ENCODE measurements at regions of chr22 and their contacts with region 1.

Region 1: GRCh38 chr22:21712894-21713712 is 22.5 kb downstream of the YPEL1 start:
- DNase-seq: peak; percentile 93
- H3K4me3 ChIP-seq: no peak overlapping the region
- H3K27ac ChIP-seq: no peak overlapping the region
- H3K4me1 ChIP-seq: peaks cover 4% of the 10 kb centered on the region
- H3K27me3 ChIP-seq: no peaks in the 10 kb centered on the region
- CTCF ChIP-seq: peak; percentile 90

Region 2: DNA sequence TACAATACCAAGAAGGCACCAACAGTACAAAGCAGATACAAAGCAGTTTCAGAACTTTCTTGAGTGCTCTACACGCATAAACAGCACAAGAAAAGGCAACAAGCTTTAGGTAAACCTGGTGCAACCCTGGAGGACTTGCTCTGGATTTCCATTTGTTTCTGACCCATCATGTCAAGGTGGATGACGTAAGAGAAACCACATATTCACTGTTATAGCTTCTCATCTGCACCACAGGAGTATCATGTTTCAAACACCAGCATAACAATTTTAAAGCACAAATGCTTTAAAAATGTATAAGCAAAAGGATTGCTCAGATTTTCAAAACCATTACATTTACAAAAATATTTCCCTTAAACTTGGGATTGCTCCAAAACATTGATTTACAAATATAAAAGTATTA is 47.5 kb after region 1 on chr22:
- CTCF ChIA-PET with region 1: no interaction called
- POLR2A ChIA-PET with region 1: no interaction called
- intact Hi-C with region 1: loop called (anchors 5 kb)
- DNase-seq: no peak
- H3K4me3 ChIP-seq: no peak overlapping the region
- H3K27ac ChIP-seq: no peak overlapping the region
- H3K4me1 ChIP-seq: peaks cover 9% of the 10 kb centered on the region
- H3K27me3 ChIP-seq: no peaks in the 10 kb centered on the region
- CTCF ChIP-seq: no peak

Region 3: GRCh38 chr22:21771631-21771976 is 58.5 kb after region 1 on chr22:
- CTCF ChIA-PET with region 1: no interaction called
- POLR2A ChIA-PET with region 1: no interaction called
- intact Hi-C with region 1: no loop called
- DNase-seq: no peak
- H3K4me3 ChIP-seq: no peak overlapping the region
- H3K27ac ChIP-seq: no peak overlapping the region
- H3K4me1 ChIP-seq: no peaks in the 10 kb centered on the region
- H3K27me3 ChIP-seq: no peaks in the 10 kb centered on the region
- CTCF ChIP-seq: no peak

Region 4: DNA sequence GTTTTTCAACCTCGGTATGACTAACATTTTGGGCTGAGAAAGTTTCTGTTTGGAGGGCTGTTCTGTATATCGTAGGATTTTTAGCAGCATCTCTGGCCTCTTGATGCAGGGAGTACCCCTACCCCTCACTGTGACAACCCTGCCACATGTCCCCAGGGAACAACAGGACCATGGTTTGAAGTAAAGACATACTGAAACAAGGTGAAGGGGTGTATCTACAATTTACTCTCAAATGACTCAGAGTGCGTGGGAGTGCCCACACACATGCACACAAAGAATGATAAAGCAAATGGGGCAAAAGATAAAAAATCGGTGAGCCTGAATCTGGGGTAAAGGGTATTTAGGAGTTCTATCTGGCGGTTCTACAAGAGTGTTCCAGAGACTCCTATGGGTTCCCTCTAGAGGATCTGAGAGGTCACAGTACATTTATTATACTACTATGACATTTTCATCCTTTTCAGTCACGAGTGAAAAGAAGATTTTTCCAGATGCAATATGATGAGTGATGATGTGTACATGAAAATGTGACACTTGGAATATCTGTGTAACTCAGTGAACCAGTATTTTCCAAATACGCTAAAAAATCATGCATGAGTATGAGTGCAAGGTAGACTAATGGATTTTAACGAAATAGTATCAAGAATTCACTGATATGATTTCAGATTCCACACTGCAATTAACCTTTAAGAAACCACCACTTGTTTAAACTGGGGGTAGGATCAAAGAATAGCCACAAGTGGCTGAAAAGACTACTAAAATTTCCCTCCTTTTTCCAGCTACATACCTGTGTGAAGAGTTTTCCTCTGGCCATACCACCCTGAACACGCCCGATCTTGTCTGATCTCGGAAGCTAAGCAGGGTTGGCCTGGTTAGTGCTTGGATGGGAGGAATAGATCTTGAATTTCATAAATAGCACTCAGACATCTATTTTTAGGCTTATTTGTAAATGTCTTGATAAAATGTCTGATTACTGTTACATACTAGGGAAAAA is 78.8 kb after region 1 on chr22:
- CTCF ChIA-PET with region 1: no interaction called
- POLR2A ChIA-PET with region 1: no interaction called
- intact Hi-C with region 1: no loop called
- DNase-seq: no peak
- H3K4me3 ChIP-seq: no peak overlapping the region
- H3K27ac ChIP-seq: no peak overlapping the region
- H3K4me1 ChIP-seq: no peaks in the 10 kb centered on the region
- H3K27me3 ChIP-seq: no peaks in the 10 kb centered on the region
- CTCF ChIP-seq: no peak

Region 5: GRCh38 chr22:21952586-21953571 is 239.8 kb after region 1 on chr22 and contains the start of gene PPM1F:
- CTCF ChIA-PET with region 1: interaction called, 3 read pairs
- POLR2A ChIA-PET with region 1: no interaction called
- intact Hi-C with region 1: loop called (anchors 2 kb)
- DNase-seq: peak; percentile 87
- H3K4me3 ChIP-seq: peak within 1 kb of the TSS; percentile 78
- H3K27ac ChIP-seq: peak within 1 kb of the TSS; percentile 85
- H3K4me1 ChIP-seq: peaks cover 21% of the 10 kb centered on the region
- H3K27me3 ChIP-seq: no peaks in the 10 kb centered on the region
- CTCF ChIP-seq: peak; percentile 75
- total RNA-seq, gene PPM1F: 85.9 and 101 TPM in 2 replicates